ENCODE measurements at regions of chr7 and their contacts with region 1.

Region 1: DNA sequence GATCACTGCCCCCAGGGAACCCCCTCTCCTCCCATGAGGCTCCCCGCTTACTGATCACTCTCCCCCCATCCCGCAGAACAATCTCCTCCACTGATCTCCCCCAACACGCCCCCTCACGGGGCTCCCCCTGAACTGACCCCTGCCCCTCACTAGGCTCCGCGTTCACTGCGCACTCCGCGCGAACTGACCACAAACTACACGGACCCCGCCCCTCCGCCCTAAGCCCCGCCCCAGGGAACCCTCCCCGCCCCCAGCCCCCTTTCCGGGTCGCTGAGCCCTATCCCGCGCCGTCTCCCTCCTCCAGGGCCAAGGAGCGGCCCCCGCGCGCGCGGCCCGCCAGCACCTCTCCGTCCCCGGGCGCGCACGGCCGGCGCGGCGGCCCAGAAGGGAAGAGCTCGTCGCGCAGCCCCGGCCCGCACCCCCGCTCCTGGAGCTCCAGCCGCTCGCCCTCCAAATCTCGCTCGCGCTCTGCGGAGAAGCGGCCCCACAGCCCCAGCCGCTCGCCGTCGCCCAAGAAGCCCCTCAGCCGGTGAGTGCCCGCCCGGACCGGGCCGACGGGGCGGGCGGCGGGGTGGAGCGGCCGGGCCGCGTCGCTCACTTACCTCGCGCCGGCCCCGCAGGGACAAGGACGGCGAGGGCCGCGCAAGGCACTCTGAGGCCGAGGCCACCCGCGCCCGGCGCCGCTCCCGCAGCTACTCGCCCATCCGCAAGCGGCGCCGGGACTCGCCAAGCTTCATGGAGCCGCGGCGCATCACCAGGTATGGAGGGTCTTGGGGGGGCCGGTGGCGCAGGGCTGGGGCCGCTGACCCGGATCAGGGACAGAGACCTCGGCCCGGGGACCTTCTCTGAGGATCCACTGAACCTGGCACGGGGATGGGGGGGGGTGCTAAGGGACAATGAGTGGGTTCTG is 19.9 kb upstream of the HSPB1 start:
- DNase-seq: peak; percentile 77 to 79
- H3K4me3 ChIP-seq: peak overlapping the region; percentile 31 to 70
- H3K27ac ChIP-seq: peak overlapping the region; percentile 67 to 84
- H3K4me1 ChIP-seq: no peaks in the 10 kb centered on the region
- H3K27me3 ChIP-seq: no peaks in the 10 kb centered on the region
- CTCF ChIP-seq: no peak
- POLR2A ChIP-seq: peak; percentile 5 to 70

Region 2: DNA sequence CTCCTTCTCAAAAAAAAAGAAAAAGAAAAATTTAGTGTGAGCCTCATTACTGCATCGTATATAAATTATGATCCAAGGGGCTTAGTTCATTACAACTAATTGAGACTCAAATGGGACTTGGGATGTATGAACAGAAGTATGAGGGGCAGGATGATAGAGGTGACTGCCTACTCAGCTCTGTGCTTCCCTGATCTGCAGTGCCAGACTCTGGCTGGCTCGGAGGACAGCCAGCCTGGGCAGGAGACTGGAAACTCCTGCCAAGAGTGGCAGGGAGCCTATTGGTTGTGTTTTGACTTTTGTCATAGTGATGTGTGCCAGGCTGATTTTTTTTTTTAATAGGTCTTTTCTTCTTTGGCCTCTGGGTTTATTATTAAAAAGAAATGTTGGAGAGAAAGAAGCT is 1902.7 kb before region 1 on chr7:
- intact Hi-C with region 1: no loop called
- DNase-seq: no peak
- H3K4me3 ChIP-seq: no peak overlapping the region
- H3K27ac ChIP-seq: no peak overlapping the region
- H3K4me1 ChIP-seq: no peaks in the 10 kb centered on the region
- H3K27me3 ChIP-seq: no peaks in the 10 kb centered on the region
- CTCF ChIP-seq: no peak
- POLR2A ChIP-seq: no peak

Region 3: DNA sequence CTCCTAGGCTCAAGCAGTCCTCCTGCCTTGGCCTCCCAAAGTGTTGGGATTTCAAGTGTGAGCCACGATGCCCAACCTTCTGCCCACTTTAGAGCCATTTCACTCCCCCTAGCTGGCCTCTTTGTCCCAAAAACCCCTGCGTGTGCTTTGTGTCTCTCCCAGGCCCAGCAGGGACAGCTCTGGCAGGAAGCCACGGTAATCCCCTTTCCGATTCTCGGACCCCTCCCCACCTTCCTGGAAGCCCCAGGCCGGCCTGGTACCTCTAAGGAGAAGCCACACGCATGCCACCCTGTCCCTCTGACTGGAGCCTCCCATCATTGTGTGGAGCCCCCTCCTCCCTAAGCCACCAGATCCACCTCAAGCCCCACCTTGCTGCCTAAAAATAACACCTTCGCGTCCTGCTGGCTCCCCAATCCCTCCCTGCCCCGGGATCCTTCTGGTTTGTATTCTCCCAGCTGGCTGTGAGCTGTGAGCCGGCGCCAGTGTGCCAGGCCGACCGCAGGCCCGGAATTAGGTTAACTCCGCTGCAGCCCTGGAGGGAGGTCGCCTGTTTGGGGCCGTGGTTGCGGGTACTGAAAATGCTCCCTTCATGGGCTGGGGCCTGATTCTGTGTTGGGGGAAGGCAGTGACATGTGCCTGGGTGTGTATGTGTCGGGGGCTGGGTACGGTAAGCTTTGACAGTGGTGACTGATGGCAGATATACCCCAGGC is 97.3 kb before region 1 on chr7:
- intact Hi-C with region 1: loop called (anchors 10 kb)
- DNase-seq: no peak
- H3K4me3 ChIP-seq: no peak overlapping the region
- H3K27ac ChIP-seq: no peak overlapping the region
- H3K4me1 ChIP-seq: no peaks in the 10 kb centered on the region
- H3K27me3 ChIP-seq: no peaks in the 10 kb centered on the region
- CTCF ChIP-seq: no peak
- POLR2A ChIP-seq: no peak

Region 4: GRCh38 chr7:76220185-76221057 is 62.2 kb before region 1 on chr7:
- intact Hi-C with region 1: no loop called
- DNase-seq: no peak
- H3K4me3 ChIP-seq: no peak overlapping the region
- H3K27ac ChIP-seq: no peak overlapping the region
- H3K4me1 ChIP-seq: no peaks in the 10 kb centered on the region
- H3K27me3 ChIP-seq: no peaks in the 10 kb centered on the region
- CTCF ChIP-seq: no peak
- POLR2A ChIP-seq: no peak

Region 5: GRCh38 chr7:76372984-76373833 is 90.6 kb after region 1 on chr7:
- intact Hi-C with region 1: no loop called
- DNase-seq: peak in 1 of 2 donors; percentile 50
- H3K4me3 ChIP-seq: no peak overlapping the region
- H3K27ac ChIP-seq: peak overlapping the region in 1 of 2 donors; percentile 6
- H3K4me1 ChIP-seq: no peaks in the 10 kb centered on the region
- H3K27me3 ChIP-seq: no peaks in the 10 kb centered on the region
- CTCF ChIP-seq: no peak
- POLR2A ChIP-seq: no peak